ENCODE measurements at regions of chr15 and their contacts with region 1.

Region 1: DNA sequence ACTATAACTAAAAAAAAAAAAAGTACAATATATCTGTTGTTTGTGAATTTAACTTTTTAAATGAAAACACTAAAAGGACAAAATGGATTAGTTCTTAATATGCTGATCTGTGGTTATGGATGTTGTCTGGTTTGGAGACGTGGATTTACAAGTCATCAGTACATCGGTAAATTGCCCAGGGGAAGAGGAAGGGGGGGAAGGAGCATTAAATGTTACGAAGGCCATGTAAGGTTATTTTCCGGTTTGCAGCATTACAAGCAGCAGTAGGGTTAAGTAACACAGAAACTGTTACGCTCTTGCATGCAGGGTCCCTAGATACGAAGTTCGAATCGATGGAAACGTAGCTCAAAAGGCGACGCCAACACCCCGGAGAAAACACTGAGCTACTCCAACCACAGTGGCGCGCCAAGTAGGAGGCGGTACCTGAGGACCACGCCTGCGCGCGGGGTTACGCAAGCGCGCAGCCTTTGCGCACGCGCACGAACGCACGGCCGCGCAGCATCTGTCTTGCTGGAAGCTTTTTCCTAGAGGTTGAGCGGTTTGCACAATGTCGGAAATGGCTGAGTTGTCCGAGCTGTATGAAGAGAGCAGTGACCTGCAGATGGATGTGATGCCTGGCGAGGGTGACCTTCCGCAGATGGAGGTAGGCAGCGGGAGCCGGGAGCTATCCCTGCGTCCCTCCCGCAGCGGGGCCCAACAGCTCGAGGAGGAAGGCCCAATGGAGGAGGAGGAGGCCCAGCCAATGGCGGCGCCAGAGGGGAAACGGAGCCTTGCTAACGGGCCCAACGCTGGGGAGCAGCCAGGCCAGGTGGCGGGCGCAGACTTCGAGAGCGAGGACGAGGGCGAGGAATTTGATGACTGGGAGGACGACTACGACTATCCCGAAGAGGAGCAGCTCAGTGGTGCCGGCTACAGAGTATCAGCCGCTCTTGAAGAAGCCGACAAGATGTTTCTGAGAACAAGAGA is at the start of gene EID1:
- DNase-seq: peak; percentile 93
- H3K4me3 Mint-ChIP-seq: peak within 1 kb of the TSS; percentile 92
- H3K27ac Mint-ChIP-seq: peak within 1 kb of the TSS; percentile 94
- H3K4me1 Mint-ChIP-seq: peaks cover 29% of the 10 kb centered on the region
- H3K27me3 Mint-ChIP-seq: peaks cover 6% of the 10 kb centered on the region
- total RNA-seq, gene EID1: 43.2 to 48.4 TPM

Region 2: GRCh38 chr15:48766196-48766595 is 111.7 kb before region 1 on chr15:
- CTCF ChIA-PET with region 1: no interaction called
- intact Hi-C with region 1: no loop called
- DNase-seq: no peak
- H3K4me3 Mint-ChIP-seq: no peak overlapping the region
- H3K27ac Mint-ChIP-seq: no peak overlapping the region
- H3K4me1 Mint-ChIP-seq: peaks cover 2% of the 10 kb centered on the region
- H3K27me3 Mint-ChIP-seq: no peaks in the 10 kb centered on the region

Region 3: GRCh38 chr15:48861813-48862431 is 16.0 kb before region 1 on chr15:
- CTCF ChIA-PET with region 1: interaction called, 10 read pairs
- intact Hi-C with region 1: no loop called
- DNase-seq: peak; percentile 61
- H3K4me3 Mint-ChIP-seq: no peak overlapping the region
- H3K27ac Mint-ChIP-seq: no peak overlapping the region
- H3K4me1 Mint-ChIP-seq: peaks cover 9% of the 10 kb centered on the region
- H3K27me3 Mint-ChIP-seq: peaks cover 2% of the 10 kb centered on the region

Region 4: DNA sequence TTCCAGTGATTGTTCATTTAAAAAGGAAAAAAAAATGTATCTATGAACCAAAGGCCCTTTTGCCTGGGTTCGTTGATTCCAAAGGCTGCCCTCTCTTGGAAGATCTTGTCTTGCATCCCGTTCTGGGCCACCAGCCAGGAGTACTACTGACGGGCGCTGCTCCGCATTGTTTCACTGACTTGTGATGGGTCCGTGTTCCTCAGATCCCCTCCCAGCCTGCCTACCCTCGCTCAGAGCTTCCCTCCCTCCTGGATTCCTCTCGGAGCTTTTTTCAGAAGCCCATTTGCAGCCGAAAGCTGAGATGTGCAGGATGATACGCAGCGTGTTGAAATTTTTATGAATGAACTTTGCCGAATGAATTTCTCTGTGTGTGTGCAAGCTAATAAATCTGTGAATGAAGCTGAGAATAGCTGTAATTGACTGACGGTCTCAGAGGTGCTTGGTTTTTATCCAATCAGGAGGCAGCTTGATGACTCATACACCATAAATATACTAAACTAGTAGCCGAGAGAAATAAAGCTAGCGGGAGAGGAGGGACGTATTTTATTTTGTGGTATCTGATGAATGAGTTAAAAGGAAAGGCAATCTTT is 85.7 kb after region 1 on chr15 and contains the start of gene SHC4:
- CTCF ChIA-PET with region 1: interaction called, 3 read pairs
- intact Hi-C with region 1: loop called (anchors 1 kb)
- DNase-seq: peak; percentile 14
- H3K4me3 Mint-ChIP-seq: peak within 1 kb of the TSS; percentile 69
- H3K27ac Mint-ChIP-seq: no peak within 1 kb of the TSS
- H3K4me1 Mint-ChIP-seq: peaks cover 31% of the 10 kb centered on the region
- H3K27me3 Mint-ChIP-seq: peaks cover 52% of the 10 kb centered on the region
- total RNA-seq, gene SHC4: 0.21 to 0.25 TPM

Region 5: DNA sequence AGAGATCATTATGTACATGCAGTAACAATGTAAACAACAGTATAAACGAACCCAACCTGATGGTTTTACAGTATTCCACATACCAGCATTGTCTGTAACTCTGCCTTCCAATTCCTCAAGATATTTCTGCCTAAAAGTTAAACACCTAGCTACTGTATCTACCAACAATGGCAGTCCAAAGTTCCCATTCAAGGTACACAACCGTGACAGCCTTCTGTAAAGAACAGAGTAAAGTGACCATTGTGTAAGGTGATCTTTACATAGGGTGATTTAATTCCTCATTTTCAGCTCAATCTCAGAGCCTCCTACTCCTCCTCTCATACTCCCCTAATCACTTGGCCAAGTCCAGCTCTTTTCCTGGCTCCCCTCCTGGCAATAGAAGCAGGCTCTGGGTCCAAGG is 157.9 kb after region 1 on chr15:
- CTCF ChIA-PET with region 1: no interaction called
- intact Hi-C with region 1: no loop called
- DNase-seq: no peak
- H3K4me3 Mint-ChIP-seq: no peak overlapping the region
- H3K27ac Mint-ChIP-seq: no peak overlapping the region
- H3K4me1 Mint-ChIP-seq: peaks cover 12% of the 10 kb centered on the region
- H3K27me3 Mint-ChIP-seq: no peaks in the 10 kb centered on the region

Region 6: DNA sequence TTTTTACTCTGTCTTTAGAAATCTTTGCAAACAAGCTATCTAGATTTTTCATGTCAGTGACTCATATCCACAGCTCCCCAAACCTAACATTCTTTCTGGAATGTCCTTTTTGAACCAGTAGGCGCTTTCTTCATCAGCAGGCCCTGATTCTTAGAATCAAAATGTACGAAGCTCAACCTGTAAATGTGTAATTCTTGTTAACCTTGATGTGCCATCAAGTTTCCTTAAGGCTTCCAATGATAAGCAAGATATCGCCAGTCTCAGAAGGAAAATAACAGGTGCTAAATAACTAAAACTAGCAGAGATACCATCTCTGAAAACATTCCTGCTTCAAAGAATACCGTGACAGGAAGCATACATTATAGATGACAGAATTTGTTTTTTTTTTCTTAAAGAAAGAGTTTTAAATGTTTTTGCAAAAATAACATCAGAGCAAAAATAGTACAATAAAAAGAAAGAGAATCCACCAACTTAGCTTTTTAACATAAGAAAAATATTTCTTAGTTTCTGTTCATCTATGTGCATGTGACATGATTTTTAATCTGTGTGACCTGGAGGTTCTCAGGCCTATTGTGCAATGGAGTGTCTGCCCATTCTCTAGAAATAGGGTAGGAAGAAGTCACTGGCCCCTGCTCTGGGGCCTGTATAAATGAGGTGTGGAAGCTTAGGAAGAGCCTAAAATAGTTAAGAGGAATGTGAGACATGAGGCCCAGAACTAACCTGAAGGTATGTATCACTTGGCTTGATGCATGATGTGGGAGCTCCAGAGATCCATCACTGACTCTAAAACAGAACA is 183.0 kb after region 1 on chr15:
- CTCF ChIA-PET with region 1: no interaction called
- intact Hi-C with region 1: loop called (anchors 5 kb)
- DNase-seq: no peak
- H3K4me3 Mint-ChIP-seq: no peak overlapping the region
- H3K27ac Mint-ChIP-seq: peak overlapping the region; percentile 75
- H3K4me1 Mint-ChIP-seq: peaks cover 16% of the 10 kb centered on the region
- H3K27me3 Mint-ChIP-seq: no peaks in the 10 kb centered on the region

Region 7: GRCh38 chr15:49169880-49170597 is 292.1 kb after region 1 on chr15 and contains the start of gene GALK2:
- CTCF ChIA-PET with region 1: no interaction called
- intact Hi-C with region 1: loop called (anchors 1 kb)
- DNase-seq: peak; percentile 91
- H3K4me3 Mint-ChIP-seq: peak within 1 kb of the TSS; percentile 96
- H3K27ac Mint-ChIP-seq: peak within 1 kb of the TSS; percentile 94
- H3K4me1 Mint-ChIP-seq: peaks cover 25% of the 10 kb centered on the region
- H3K27me3 Mint-ChIP-seq: no peaks in the 10 kb centered on the region
- total RNA-seq, gene GALK2: 22.6 to 24.1 TPM

Region 8: DNA sequence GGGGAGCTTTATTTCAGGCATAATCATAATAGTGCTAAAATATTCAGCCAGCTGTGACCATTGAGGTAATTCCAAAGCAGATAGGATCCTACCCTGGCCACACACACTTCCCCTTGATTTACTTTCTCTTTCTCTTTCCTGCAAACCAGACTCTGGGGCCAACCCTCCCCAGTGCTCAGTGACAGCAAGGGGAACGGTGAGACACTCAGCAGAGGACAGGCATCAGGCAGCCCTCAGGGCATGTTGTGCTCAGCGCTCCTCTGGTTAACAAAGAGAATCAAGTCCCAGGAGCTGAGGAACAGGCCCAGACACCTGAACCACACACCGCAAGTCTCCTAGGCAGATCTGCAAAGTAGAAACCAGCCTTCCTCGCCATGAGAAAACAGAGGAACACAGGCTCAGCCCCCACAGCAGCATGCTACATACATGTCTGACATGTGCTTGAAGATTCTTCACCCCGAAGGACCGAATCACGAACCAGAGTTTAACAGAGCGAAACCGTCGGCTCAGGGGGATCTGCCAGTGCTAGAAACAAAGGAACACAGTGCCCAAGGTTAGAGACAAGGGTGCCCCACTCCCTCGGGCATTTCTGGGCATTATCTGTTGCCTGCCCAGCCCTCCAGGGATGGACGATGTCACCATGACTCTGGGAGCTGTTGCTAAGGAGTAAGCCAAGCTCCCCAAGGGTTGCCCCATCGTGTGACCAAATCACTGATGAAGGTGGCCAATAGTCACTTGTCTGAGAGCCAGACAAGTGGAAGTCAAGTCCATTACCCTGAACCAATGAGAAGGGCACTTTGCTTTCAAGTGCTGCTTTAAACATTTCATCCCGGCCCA is 1370.1 kb after region 1 on chr15:
- CTCF ChIA-PET with region 1: no interaction called
- intact Hi-C with region 1: loop called (anchors 10 kb)
- DNase-seq: peak; percentile 88
- H3K4me3 Mint-ChIP-seq: peak overlapping the region; percentile 81
- H3K27ac Mint-ChIP-seq: peak overlapping the region; percentile 99
- H3K4me1 Mint-ChIP-seq: peaks cover 42% of the 10 kb centered on the region
- H3K27me3 Mint-ChIP-seq: no peaks in the 10 kb centered on the region

Measured in activated naive CD4-positive, alpha-beta T cell treated with anti-CD3 and anti-CD28 coated beads for 36 hours (primary cell).